HepG2 (cell line): ENCODE measurements at regions of chr5 and their contacts with region 1.

Region 1: DNA sequence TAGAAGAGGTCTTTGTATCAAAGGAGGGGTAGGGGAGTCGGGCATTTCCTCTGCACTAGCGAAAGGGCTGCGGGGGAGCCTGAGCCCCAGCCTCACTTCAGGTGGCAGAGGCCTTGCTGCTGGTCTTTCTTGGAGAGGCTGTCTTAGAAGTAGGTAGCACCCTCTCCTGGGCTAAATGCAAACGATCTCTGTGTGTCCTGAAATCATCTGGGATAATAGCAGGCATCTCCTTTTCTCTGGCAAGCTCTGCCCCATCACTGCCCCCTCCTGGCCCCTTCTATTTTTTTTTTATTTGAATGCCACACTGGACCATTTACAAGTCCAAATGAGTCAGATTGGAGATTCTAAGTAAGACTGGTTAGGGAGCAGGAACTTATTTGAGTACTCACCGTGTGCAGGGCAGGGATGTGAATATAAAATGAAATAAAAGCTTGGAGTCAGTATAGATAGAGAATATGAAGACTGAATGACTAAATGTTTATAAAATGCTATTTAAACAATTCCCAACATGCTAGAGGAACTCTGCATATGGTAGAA is 137.1 kb downstream of the FGF1 start:
- DNase-seq: peak; percentile 88
- ATAC-seq: peak; percentile 96
- H3K4me3 ChIP-seq: no peak overlapping the region
- H3K27ac ChIP-seq: no peak overlapping the region
- H3K4me1 ChIP-seq: peaks cover 42% of the 10 kb centered on the region
- H3K27me3 ChIP-seq: no peaks in the 10 kb centered on the region
- CTCF ChIP-seq: peak; percentile 91
- EP300 ChIP-seq: 0 out of 4 replicates have a peak, but pooled peaks of 1 of the 2 experiments have one; percentile 5
- POLR2A ChIP-seq: no peak
- RAD21 ChIP-seq: peak; percentile 93

Region 2: DNA sequence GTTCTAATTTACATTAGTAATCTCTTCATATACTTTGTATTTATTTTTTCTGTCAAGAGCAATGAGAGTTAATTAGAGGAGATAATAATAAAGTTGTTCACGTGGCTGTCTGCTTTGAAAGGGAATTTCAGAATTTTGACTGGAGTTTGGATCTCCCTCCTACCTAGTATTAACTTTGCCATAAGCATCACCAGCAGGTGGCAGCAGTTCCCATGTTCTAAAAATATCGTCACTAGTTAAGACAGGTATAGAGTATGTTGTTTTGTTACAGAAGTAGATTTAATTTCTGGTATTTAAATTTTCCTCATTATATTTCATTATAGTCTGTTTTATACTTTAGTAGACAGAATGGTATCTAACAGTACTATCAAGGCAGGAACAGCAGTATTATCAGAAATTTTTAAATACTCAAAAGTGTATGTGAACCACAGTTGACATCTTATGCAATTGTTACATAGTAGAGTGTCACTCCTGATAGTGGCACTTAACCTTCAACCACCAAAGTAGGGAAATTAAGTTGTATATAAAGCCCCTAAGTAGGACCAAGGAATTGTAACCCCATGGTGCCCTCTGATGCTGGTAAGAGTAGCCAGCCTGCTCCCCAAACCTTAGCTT is 556.4 kb before region 1 on chr5:
- CTCF ChIA-PET with region 1: no interaction called
- POLR2A ChIA-PET with region 1: no interaction called
- in situ Hi-C with region 1: loop called (anchors 25 kb)
- intact Hi-C with region 1: no loop called
- DNase-seq: peak; percentile 55
- ATAC-seq: peak; percentile 78
- H3K4me3 ChIP-seq: no peak overlapping the region
- H3K27ac ChIP-seq: no peak overlapping the region
- H3K4me1 ChIP-seq: peaks cover 4% of the 10 kb centered on the region
- H3K27me3 ChIP-seq: no peaks in the 10 kb centered on the region
- CTCF ChIP-seq: peak; percentile 74
- EP300 ChIP-seq: no peak
- POLR2A ChIP-seq: no peak
- RAD21 ChIP-seq: peak; percentile 48; the same call in 1 of the 2 replicates

Region 3: GRCh38 chr5:142156839-142157463 is 391.9 kb before region 1 on chr5:
- CTCF ChIA-PET with region 1: interaction called, 44 read pairs
- POLR2A ChIA-PET with region 1: no interaction called
- in situ Hi-C with region 1: loop called (anchors 5 kb)
- intact Hi-C with region 1: loop called (anchors 1 kb)
- DNase-seq: no peak
- ATAC-seq: no peak
- H3K4me3 ChIP-seq: no peak overlapping the region
- H3K27ac ChIP-seq: no peak overlapping the region
- H3K4me1 ChIP-seq: peaks cover 25% of the 10 kb centered on the region
- H3K27me3 ChIP-seq: no peaks in the 10 kb centered on the region
- CTCF ChIP-seq: no peak
- EP300 ChIP-seq: no peak
- POLR2A ChIP-seq: no peak
- RAD21 ChIP-seq: no peak

Region 4: GRCh38 chr5:142306077-142306502 is 242.7 kb before region 1 on chr5:
- CTCF ChIA-PET with region 1: no interaction called
- POLR2A ChIA-PET with region 1: no interaction called
- in situ Hi-C with region 1: loop called (anchors 5 kb)
- intact Hi-C with region 1: no loop called
- DNase-seq: peak; percentile 77
- ATAC-seq: peak; percentile 79
- H3K4me3 ChIP-seq: no peak overlapping the region
- H3K27ac ChIP-seq: peak overlapping the region; percentile 21
- H3K4me1 ChIP-seq: peaks cover 37% of the 10 kb centered on the region
- H3K27me3 ChIP-seq: no peaks in the 10 kb centered on the region
- CTCF ChIP-seq: no peak
- EP300 ChIP-seq: peak in 1 of 2 experiments; percentile 68; a peak in 1 of 4 replicates
- POLR2A ChIP-seq: no peak
- RAD21 ChIP-seq: no peak

Region 5: GRCh38 chr5:142324871-142325724 is 223.7 kb before region 1 on chr5 and contains the start of gene SPRY4:
- CTCF ChIA-PET with region 1: interaction called, 5 read pairs
- POLR2A ChIA-PET with region 1: interaction called, 3 read pairs
- in situ Hi-C with region 1: no loop called
- intact Hi-C with region 1: loop called (anchors 2 kb)
- DNase-seq: peak; percentile 97
- ATAC-seq: peak; percentile 57
- H3K4me3 ChIP-seq: peak within 1 kb of the TSS; percentile 92 to 99 (median 98)
- H3K27ac ChIP-seq: peak within 1 kb of the TSS; percentile 93
- H3K4me1 ChIP-seq: peaks cover 65% of the 10 kb centered on the region
- H3K27me3 ChIP-seq: no peaks in the 10 kb centered on the region; a peak in 1 of 5 replicates
- CTCF ChIP-seq: no peak; the same call in 1 of the 2 replicates
- EP300 ChIP-seq: peak in 1 of 2 experiments; percentile 41; a peak in 1 of 4 replicates
- POLR2A ChIP-seq: peak in 1 of 2 experiments; percentile 93; a peak in 2 of 4 replicates
- RAD21 ChIP-seq: peak; percentile 57; the same call in 1 of the 2 replicates
- total RNA-seq, gene SPRY4: 8.9 and 9.0 TPM in 2 replicates